ENCODE measurements at regions of chr14 and their contacts with region 1.

Region 1: GRCh38 chr14:50003213-50004031 is 110.5 kb downstream of the ARF6 start:
- DNase-seq: peak; percentile 88
- H3K4me3 Mint-ChIP-seq: peak overlapping the region; percentile 72
- H3K27ac Mint-ChIP-seq: peak overlapping the region; percentile 97
- H3K4me1 Mint-ChIP-seq: peaks cover 77% of the 10 kb centered on the region
- H3K27me3 Mint-ChIP-seq: no peaks in the 10 kb centered on the region

Region 2: GRCh38 chr14:49828640-49829039 is 174.8 kb before region 1 on chr14:
- CTCF ChIA-PET with region 1: no interaction called
- POLR2A ChIA-PET with region 1: no interaction called
- DNase-seq: no peak
- H3K4me3 Mint-ChIP-seq: no peak overlapping the region
- H3K27ac Mint-ChIP-seq: peak overlapping the region; percentile 9
- H3K4me1 Mint-ChIP-seq: peaks cover 5% of the 10 kb centered on the region
- H3K27me3 Mint-ChIP-seq: no peaks in the 10 kb centered on the region

Region 3: DNA sequence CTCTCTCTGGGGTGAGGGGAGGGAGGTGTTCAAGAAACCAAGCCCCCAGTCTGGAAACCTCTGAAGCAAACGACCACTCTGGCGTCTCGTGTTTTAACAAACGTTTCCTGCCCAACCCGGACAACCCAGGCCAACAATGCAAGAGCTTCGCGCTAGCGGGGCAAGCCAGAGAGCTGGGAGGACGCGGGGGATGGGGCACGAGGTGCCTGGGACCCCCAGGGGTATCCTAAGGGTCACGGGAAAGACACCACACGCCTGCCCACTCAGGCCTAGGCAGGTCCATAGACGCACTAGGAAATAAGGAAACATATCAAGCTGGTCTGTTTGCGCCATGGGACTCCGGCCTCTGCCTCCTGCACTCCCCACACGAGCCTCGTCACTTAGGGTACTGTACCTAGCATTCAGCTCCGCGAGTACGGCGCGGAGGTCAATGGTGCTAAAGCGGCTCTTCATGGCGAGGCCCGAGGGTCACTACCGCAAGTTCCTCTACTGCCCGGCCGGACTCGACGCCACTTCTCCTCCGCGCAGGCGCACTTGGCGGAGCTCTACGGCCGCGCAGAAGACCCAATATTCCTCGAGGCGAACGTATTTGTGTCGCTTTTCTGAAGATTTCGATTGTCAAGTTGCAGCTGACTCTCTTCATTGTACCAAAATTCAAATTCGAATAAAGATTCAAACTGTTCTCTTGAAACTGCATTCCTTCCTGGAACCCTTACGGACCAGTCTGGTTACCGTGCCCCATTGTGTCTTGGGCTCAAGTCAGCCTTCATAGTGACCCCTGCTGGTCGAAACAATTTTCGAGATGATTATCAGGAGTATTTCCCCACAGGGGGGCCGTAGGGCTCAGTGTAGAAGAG is 150.9 kb before region 1 on chr14 and contains the start of gene NEMF:
- CTCF ChIA-PET with region 1: interaction called, 10 read pairs
- POLR2A ChIA-PET with region 1: interaction called, 3 read pairs
- DNase-seq: peak; percentile 90
- H3K4me3 Mint-ChIP-seq: peak within 1 kb of the TSS; percentile 92
- H3K27ac Mint-ChIP-seq: peak within 1 kb of the TSS; percentile 97
- H3K4me1 Mint-ChIP-seq: peaks cover 45% of the 10 kb centered on the region
- H3K27me3 Mint-ChIP-seq: no peaks in the 10 kb centered on the region
- total RNA-seq, gene NEMF: 76.7 to 89.1 TPM

Region 4: DNA sequence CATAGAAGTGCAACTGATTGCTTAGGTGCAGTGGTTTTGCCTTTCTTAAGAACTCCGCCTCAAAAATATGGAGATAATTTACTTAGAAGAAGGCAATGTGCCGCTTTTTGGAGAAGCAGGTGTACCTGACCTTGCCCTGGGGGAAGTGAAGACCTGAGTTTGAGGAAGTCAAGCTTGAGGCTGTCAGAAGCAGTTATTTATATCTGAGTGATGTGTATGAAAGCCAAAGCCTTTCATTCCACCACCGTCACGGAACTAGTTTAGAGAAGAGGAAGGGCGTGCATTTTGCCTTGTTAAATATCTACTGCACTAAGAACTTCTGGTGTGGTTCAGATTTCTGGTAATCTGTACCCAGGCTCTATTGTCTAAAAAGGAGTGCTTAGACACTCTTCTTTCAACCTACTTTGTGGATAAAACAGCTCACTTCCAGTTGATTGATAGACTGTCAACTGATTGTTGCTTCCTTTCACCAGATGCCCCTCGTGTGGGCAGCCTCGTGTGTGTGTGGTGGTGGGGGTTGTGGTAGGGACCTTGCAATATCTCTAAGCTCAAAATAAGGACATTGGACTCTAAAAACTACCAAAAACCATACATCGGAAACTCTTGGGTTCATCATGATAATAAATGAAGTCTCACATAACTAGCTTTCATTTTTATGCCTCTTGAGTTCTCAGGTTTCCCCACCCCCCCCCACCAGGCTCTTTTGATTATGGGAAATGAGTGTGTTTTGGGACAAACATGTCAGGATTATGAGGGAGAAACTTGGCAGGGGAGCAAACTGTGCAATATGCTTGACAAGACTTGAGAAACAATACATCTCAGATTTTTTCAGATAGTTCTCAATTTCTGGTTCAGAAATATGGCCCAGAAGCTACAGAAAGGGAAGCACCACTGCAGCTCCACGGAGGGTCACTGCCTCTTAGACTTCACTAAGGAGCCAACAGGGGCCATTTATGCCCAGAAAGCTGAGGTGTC is 32.0 kb before region 1 on chr14:
- CTCF ChIA-PET with region 1: interaction called, 6 read pairs
- POLR2A ChIA-PET with region 1: interaction called, 29 read pairs
- DNase-seq: peak; percentile 79
- H3K4me3 Mint-ChIP-seq: peak overlapping the region; percentile 66
- H3K27ac Mint-ChIP-seq: peak overlapping the region; percentile 98
- H3K4me1 Mint-ChIP-seq: peaks cover 68% of the 10 kb centered on the region
- H3K27me3 Mint-ChIP-seq: no peaks in the 10 kb centered on the region

Region 5: DNA sequence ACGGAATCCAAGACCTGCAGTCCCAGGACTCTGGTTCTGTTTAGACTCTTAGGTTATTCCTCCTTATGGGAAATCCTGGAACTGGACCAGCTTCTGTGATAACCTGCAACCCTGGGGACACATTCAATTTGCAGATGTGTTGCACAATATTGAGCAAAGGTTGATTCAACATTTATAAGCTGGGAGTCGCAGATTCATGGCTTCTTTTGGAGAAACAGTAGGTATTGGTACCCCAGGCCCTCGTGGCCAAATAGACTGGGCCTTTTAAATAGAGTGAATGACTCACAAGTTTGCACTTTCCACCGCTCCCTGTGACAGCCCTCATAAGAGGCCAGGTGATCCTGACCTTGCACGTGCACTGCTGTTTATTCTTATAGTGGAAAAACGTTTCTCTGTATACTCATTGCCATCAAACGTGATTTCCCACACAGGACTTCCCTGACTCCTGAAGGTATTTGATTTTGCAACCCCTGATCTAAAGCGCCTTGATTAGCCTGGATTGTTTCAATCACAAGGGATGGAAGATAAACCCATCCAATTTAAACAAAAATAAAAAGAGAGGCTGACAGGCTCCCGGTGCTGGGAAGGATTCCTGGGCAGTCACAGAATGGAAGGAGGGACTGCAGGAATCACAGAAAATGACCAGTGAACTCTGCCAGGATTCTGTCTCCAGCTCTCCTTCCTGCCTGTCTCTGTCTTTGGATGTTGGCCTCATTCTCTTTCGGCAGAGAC is 14.9 kb after region 1 on chr14:
- CTCF ChIA-PET with region 1: interaction called, 15 read pairs
- POLR2A ChIA-PET with region 1: interaction called, 4 read pairs
- DNase-seq: no peak
- H3K4me3 Mint-ChIP-seq: no peak overlapping the region
- H3K27ac Mint-ChIP-seq: no peak overlapping the region
- H3K4me1 Mint-ChIP-seq: peaks cover 52% of the 10 kb centered on the region
- H3K27me3 Mint-ChIP-seq: no peaks in the 10 kb centered on the region

Region 6: GRCh38 chr14:50082784-50083466 is 79.5 kb after region 1 on chr14:
- CTCF ChIA-PET with region 1: interaction called, 12 read pairs
- POLR2A ChIA-PET with region 1: interaction called, 3 read pairs
- DNase-seq: peak; percentile 91
- H3K4me3 Mint-ChIP-seq: peak overlapping the region; percentile 74
- H3K27ac Mint-ChIP-seq: peak overlapping the region; percentile 98
- H3K4me1 Mint-ChIP-seq: peaks cover 85% of the 10 kb centered on the region
- H3K27me3 Mint-ChIP-seq: no peaks in the 10 kb centered on the region

Measured in activated CD4-positive, alpha-beta T cell treated with anti-CD3 and anti-CD28 coated beads, Interleukin-2, amount 10 ng/mL, durations not matched to agents 7 days and 5 days (primary cell).